Esophagus squamous epithelium (tissue), 5 donors: ENCODE measurements at regions of chr13 and their contacts with region 1.

Region 1: GRCh38 chr13:100514788-100515409 is 73.7 kb downstream of the GGACT start:
- DNase-seq: no peak
- H3K4me3 ChIP-seq: no peak overlapping the region
- H3K27ac ChIP-seq: no peak overlapping the region
- H3K4me1 ChIP-seq: peaks cover 0 to 9% (median 3%) of the 10 kb centered on the region in 3 donors
- H3K27me3 ChIP-seq: no peaks in the 10 kb centered on the region
- CTCF ChIP-seq: peak; percentile 79 to 91 (median 80)
- POLR2A ChIP-seq: no peak

Region 2: DNA sequence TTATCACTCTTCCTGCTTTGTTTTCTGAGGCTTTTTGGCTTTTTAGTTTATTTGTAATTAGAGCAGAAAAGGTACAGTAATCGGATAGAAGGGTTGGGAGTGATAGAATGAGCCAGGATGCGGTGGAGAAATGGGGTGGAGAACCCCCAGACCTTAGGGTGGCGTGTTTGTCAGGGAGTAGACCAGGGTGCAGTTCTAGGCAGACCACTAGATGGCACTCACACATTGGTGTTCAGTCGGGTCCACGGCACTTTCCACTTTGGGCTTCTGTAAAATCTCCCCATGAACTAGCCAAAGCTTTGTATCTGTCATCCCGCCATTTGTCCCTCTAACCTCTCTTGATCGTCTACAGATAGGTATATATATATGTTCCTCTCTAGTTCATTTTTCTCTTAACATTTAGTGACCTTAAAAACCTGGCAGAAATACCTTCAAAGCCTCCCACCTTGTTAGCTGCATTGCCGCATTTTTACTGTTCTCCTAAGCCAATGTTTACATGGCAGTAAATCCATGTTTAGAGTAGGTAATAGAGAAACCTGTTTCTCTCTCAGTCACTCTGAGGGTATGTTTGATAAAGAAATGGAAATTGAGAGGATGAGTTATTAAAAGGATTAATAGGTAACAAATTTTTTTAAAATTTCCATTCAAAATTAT is 858.7 kb before region 1 on chr13:
- intact Hi-C with region 1: loop called (anchors 10 kb)
- DNase-seq: peak; percentile 3
- H3K4me3 ChIP-seq: no peak overlapping the region
- H3K27ac ChIP-seq: peak overlapping the region; percentile 35 to 67 (median 52)
- H3K4me1 ChIP-seq: peaks cover 0 to 42% (median 8%) of the 10 kb centered on the region in 3 donors
- H3K27me3 ChIP-seq: no peaks in the 10 kb centered on the region
- CTCF ChIP-seq: peak; percentile 83 to 91 (median 88)
- POLR2A ChIP-seq: no peak

Region 3: GRCh38 chr13:99916366-99917103 is 598.4 kb before region 1 on chr13:
- intact Hi-C with region 1: loop called (anchors 10 kb)
- DNase-seq: no peak
- H3K4me3 ChIP-seq: no peak overlapping the region
- H3K27ac ChIP-seq: no peak overlapping the region
- H3K4me1 ChIP-seq: no peaks in the 10 kb centered on the region
- H3K27me3 ChIP-seq: peaks cover 0 to 45% (median 0%) of the 10 kb centered on the region in 4 donors
- CTCF ChIP-seq: peak; percentile 43 to 94 (median 84)
- POLR2A ChIP-seq: no peak

Region 4: DNA sequence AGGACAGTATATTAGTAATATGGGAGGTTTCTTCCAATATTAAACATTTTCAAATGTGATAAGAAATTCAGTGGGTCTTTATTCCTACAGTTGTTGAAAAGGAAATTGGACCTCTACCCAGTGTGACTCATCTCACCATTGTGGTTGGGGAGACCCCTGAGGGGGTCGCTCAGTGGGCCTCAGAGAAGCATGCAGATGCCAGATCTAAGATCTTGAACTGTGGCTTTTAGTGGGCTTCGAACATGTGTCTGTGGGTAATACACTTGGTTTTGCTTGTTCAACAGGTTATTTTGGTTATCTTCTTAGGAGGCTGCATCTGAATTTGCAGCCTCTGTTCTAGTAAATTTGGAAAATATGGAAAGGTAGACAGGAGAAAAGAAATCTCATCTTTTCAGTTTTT is 293.7 kb before region 1 on chr13:
- intact Hi-C with region 1: no loop called
- DNase-seq: no peak
- H3K4me3 ChIP-seq: no peak overlapping the region
- H3K27ac ChIP-seq: no peak overlapping the region
- H3K4me1 ChIP-seq: peaks cover 0 to 6% (median 0%) of the 10 kb centered on the region in 3 donors
- H3K27me3 ChIP-seq: no peaks in the 10 kb centered on the region
- CTCF ChIP-seq: no peak
- POLR2A ChIP-seq: no peak

Region 5: GRCh38 chr13:100235311-100235901 is 279.5 kb before region 1 on chr13:
- intact Hi-C with region 1: loop called (anchors 10 kb)
- DNase-seq: no peak
- H3K4me3 ChIP-seq: no peak overlapping the region
- H3K27ac ChIP-seq: no peak overlapping the region
- H3K4me1 ChIP-seq: peaks cover 0 to 27% (median 15%) of the 10 kb centered on the region in 3 donors
- H3K27me3 ChIP-seq: no peaks in the 10 kb centered on the region
- CTCF ChIP-seq: peak; percentile 34 to 69 (median 54)
- POLR2A ChIP-seq: no peak

Region 6: GRCh38 chr13:100872761-100873160 is 357.9 kb after region 1 on chr13:
- intact Hi-C with region 1: no loop called
- DNase-seq: no peak
- H3K4me3 ChIP-seq: no peak overlapping the region
- H3K27ac ChIP-seq: no peak overlapping the region
- H3K4me1 ChIP-seq: no peaks in the 10 kb centered on the region
- H3K27me3 ChIP-seq: no peaks in the 10 kb centered on the region
- CTCF ChIP-seq: no peak
- POLR2A ChIP-seq: no peak